Activated naive CD4-positive, alpha-beta T cell treated with anti-CD3 and anti-CD28 coated beads for 36 hours (primary cell): ENCODE measurements at regions of chr22 and their contacts with region 1.

Region 1: GRCh38 chr22:27804470-27805297 is 3.1 kb upstream of the MN1 start:
- DNase-seq: peak; percentile 74
- H3K4me3 Mint-ChIP-seq: no peak overlapping the region
- H3K27ac Mint-ChIP-seq: no peak overlapping the region
- H3K4me1 Mint-ChIP-seq: peaks cover 11% of the 10 kb centered on the region
- H3K27me3 Mint-ChIP-seq: peaks cover 17% of the 10 kb centered on the region

Region 2: DNA sequence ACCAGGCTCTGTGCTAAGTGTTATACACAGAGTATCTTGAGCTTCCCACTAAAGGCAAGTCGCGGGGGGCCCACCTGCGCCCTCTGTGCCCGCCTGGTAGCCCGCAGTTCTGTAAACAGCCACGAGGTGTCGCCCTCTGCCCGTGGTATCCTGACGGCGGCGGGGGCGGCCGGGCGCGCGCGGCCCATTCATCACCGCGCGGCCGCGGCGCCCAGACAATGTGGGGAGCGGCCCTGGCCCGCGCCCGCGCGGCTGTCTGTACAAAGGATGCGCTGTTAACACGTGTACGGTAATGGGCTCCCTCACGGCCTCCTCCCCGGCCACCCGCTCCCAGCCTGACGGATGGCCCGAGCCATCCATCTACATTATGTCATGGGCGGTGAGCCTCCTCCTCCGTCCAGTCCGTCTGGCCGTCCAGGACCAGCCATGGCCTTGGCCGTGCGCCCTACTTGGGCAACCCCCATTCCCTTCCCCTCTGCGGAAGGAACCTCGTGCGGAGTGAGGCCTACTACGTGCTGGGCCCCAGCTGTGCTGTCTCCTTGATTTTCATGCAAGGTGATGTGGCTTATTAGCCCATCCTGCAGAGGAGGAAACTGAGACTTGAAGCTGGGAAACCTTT is 1047.9 kb before region 1 on chr22:
- CTCF ChIA-PET with region 1: no interaction called
- intact Hi-C with region 1: loop called (anchors 10 kb)
- DNase-seq: peak; percentile 35
- H3K4me3 Mint-ChIP-seq: no peak overlapping the region
- H3K27ac Mint-ChIP-seq: no peak overlapping the region
- H3K4me1 Mint-ChIP-seq: no peaks in the 10 kb centered on the region
- H3K27me3 Mint-ChIP-seq: no peaks in the 10 kb centered on the region

Region 3: DNA sequence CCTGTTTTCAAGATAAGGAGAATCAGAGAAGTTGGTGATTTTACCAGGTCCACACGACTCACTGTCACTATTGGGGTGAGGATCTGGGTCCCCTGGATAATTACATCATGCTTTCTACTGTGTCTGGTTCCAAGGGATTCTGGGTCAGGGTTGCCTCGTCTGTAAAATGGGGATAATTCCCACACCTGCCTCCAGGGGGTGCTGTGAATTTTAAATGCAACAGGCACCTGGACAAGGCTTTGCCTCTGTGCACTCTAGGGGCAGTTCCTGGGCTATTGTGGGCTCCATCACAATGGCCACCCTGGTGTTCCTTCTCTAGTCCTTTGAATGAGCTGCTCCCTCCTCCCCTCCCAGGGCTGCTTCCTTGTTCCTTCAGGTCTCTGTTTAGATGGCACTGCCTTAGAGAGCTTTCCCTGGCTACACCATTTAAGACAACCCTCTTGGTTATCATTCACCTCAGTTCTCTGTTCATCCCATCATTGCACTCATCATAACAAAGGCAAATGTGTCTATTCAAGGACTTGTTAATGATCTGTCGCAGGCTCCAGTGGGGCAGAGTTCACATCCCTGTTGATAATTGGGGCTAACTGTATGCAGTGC is 968.7 kb before region 1 on chr22:
- CTCF ChIA-PET with region 1: no interaction called
- intact Hi-C with region 1: loop called (anchors 10 kb)
- DNase-seq: peak; percentile 80
- H3K4me3 Mint-ChIP-seq: no peak overlapping the region
- H3K27ac Mint-ChIP-seq: no peak overlapping the region
- H3K4me1 Mint-ChIP-seq: no peaks in the 10 kb centered on the region
- H3K27me3 Mint-ChIP-seq: no peaks in the 10 kb centered on the region

Region 4: DNA sequence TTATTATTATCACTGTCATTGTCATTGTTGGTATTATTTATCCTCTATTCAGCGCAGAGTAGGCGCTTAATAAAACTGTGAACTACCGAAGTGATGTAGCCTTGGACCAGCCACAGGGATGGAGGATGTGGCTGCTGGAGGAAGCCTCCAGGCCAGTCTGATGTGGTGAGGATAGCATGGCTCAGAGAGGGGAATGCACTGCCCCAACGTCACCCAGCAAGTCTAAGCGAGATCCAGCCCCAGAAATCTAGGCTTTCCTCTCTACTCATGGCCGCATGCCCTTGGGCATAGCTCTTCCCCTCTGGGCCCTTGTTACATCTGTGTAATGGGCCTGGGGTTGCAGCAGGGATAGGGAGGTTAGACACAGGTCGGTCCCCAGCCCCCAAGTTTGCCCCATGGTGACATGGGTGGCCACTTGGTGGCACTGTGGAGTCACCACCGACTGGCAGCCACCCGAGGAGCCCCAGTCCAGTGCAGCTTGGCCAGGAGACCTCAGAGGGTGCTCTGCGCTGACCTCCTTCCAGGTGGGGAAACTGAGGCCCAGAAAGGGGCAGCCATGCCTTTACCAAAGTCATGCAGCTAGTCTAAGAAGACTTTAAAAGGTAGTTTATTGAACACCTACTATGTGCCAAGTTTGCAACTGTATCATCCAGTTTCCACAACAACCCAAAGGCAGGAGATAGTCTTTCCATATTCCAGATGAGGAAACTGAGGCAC is 398.9 kb before region 1 on chr22:
- CTCF ChIA-PET with region 1: no interaction called
- intact Hi-C with region 1: loop called (anchors 10 kb)
- DNase-seq: peak; percentile 22
- H3K4me3 Mint-ChIP-seq: no peak overlapping the region
- H3K27ac Mint-ChIP-seq: no peak overlapping the region
- H3K4me1 Mint-ChIP-seq: no peaks in the 10 kb centered on the region
- H3K27me3 Mint-ChIP-seq: peaks cover 20% of the 10 kb centered on the region